Heart left ventricle (tissue), 16 donors: ENCODE measurements at regions of chr9 and their contacts with region 1.

Region 1: GRCh38 chr9:84170521-84171141 is 169.9 kb downstream of the SLC28A3 start:
- DNase-seq: peak; percentile 86 to 95 (median 88)
- ATAC-seq: peak; percentile 97 to 99 (median 98)
- H3K4me3 ChIP-seq: no peak overlapping the region
- H3K27ac ChIP-seq: peak overlapping the region in 11 of 12 donors; percentile 21 to 69 (median 48)
- H3K4me1 ChIP-seq: peaks cover 0 to 14% (median 9%) of the 10 kb centered on the region in 12 donors
- H3K27me3 ChIP-seq: no peaks in the 10 kb centered on the region
- CTCF ChIP-seq: peak in 4 of 12 donors; percentile 19 to 43 (median 29)
- POLR2A ChIP-seq: no peak

Region 2: GRCh38 chr9:83538172-83538889 is 632.3 kb before region 1 on chr9 and contains the start of gene FRMD3:
- intact Hi-C with region 1: no loop called
- DNase-seq: peak; percentile 89 to 94 (median 92)
- ATAC-seq: peak; percentile 96 to 98 (median 97)
- H3K4me3 ChIP-seq: peak within 1 kb of the TSS; percentile 52 to 88 (median 76)
- H3K27ac ChIP-seq: peak within 1 kb of the TSS; percentile 33 to 91 (median 82)
- H3K4me1 ChIP-seq: peaks cover 0 to 22% (median 10%) of the 10 kb centered on the region in 12 donors
- H3K27me3 ChIP-seq: peaks cover 0 to 11% (median 0%) of the 10 kb centered on the region in 9 donors
- CTCF ChIP-seq: peak; percentile 65 to 94 (median 84)
- POLR2A ChIP-seq: peak in 1 of 2 donors; percentile 42
- total RNA-seq, gene FRMD3: 48.4 to 195 (median 82.4) TPM

Region 3: GRCh38 chr9:83956434-83957247 is 214.0 kb before region 1 on chr9:
- intact Hi-C with region 1: loop called in 2 of 10 experiments (anchors 5 to 10 kb)
- DNase-seq: peak; percentile 78 to 88 (median 84)
- ATAC-seq: peak; percentile 86 to 96 (median 94)
- H3K4me3 ChIP-seq: peak overlapping the region; percentile 35 to 95 (median 72)
- H3K27ac ChIP-seq: peak overlapping the region; percentile 19 to 93 (median 82)
- H3K4me1 ChIP-seq: peaks cover 0 to 21% (median 11%) of the 10 kb centered on the region in 12 donors
- H3K27me3 ChIP-seq: no peaks in the 10 kb centered on the region
- CTCF ChIP-seq: no peak
- POLR2A ChIP-seq: peak in 1 of 2 donors; percentile 14

Region 4: GRCh38 chr9:84061594-84062193 is 108.9 kb before region 1 on chr9:
- intact Hi-C with region 1: loop called in 5 of 10 experiments (anchors 2 to 10 kb)
- DNase-seq: peak in 1 of 5 donors; percentile 53
- ATAC-seq: peak; percentile 85 to 93 (median 88)
- H3K4me3 ChIP-seq: no peak overlapping the region
- H3K27ac ChIP-seq: peak overlapping the region in 10 of 12 donors; percentile 26 to 91 (median 58)
- H3K4me1 ChIP-seq: peaks cover 0 to 22% (median 2%) of the 10 kb centered on the region in 12 donors
- H3K27me3 ChIP-seq: no peaks in the 10 kb centered on the region
- CTCF ChIP-seq: no peak
- POLR2A ChIP-seq: no peak

Region 5: DNA sequence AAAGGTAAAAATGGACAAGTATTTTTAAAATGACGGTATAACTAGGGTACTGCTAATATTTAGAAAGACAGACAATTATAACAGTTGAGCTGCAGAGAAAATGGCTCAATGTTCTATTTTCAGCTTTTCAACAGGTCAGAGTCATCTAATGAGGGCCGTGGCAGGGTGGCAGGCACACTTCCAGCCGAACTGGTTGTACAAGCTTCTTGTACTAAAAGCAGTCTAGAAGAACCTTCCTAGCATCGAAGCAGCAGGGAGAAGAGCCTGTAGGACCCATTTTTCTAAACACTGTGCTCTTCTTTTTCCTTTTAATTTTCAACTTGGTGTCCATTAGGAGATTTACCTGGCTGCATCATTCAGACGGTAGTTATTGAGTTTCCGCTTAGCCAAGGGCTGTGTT is 84.3 kb after region 1 on chr9:
- intact Hi-C with region 1: loop called in 5 of 10 experiments (anchors 5 to 10 kb)
- DNase-seq: peak in 1 of 5 donors; percentile 46
- ATAC-seq: peak in 2 of 4 donors; percentile 49 to 75
- H3K4me3 ChIP-seq: no peak overlapping the region
- H3K27ac ChIP-seq: no peak overlapping the region
- H3K4me1 ChIP-seq: peaks cover 0 to 3% (median 0%) of the 10 kb centered on the region in 12 donors
- H3K27me3 ChIP-seq: no peaks in the 10 kb centered on the region
- CTCF ChIP-seq: no peak
- POLR2A ChIP-seq: no peak